Gastrocnemius medialis (tissue), 4 donors: ENCODE measurements at regions of chr11 and their contacts with region 1.

Region 1: GRCh38 chr11:30143098-30143705 is 87.6 kb upstream of the FSHB start:
- DNase-seq: no peak
- ATAC-seq: no peak
- H3K4me3 ChIP-seq: no peak overlapping the region
- H3K27ac ChIP-seq: no peak overlapping the region
- H3K4me1 ChIP-seq: no peaks in the 10 kb centered on the region
- H3K27me3 ChIP-seq: no peaks in the 10 kb centered on the region
- CTCF ChIP-seq: peak in 3 of 5 experiments; percentile 14 to 58 (median 53)
- POLR2A ChIP-seq: no peak

Region 2: DNA sequence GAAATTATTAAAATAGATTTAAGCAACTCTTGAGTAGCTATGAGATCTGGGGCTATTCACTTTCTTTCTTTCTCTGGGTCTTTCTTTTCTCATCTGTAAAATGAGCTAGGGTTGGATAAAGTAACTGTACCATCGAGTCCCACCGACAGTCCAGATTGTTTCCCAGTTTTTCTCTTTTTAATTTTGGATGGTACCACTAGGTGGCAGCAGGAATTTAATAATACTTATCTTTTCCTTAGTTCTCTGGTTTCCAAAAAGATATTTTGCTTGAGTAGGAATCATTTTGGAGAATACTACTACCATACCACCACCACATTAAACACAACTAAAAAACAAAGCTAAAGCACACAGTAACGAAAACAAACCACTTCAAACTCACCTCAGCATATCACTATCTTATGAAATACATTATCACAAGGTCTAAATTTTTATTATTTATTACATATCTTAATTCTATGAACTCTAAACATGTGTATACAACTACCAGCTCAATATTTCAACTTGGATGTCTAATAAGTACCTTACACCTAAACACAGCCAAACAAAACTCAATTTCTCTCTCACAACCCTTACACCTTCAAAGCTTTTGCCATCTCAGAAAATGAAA is 710.4 kb before region 1 on chr11:
- in situ Hi-C with region 1: no loop called
- intact Hi-C with region 1: loop called (anchors 5 kb)
- DNase-seq: no peak
- ATAC-seq: no peak
- H3K4me3 ChIP-seq: no peak overlapping the region
- H3K27ac ChIP-seq: no peak overlapping the region
- H3K4me1 ChIP-seq: no peaks in the 10 kb centered on the region
- H3K27me3 ChIP-seq: no peaks in the 10 kb centered on the region
- CTCF ChIP-seq: peak in 2 of 5 experiments; percentile 11 to 25
- POLR2A ChIP-seq: no peak

Region 3: DNA sequence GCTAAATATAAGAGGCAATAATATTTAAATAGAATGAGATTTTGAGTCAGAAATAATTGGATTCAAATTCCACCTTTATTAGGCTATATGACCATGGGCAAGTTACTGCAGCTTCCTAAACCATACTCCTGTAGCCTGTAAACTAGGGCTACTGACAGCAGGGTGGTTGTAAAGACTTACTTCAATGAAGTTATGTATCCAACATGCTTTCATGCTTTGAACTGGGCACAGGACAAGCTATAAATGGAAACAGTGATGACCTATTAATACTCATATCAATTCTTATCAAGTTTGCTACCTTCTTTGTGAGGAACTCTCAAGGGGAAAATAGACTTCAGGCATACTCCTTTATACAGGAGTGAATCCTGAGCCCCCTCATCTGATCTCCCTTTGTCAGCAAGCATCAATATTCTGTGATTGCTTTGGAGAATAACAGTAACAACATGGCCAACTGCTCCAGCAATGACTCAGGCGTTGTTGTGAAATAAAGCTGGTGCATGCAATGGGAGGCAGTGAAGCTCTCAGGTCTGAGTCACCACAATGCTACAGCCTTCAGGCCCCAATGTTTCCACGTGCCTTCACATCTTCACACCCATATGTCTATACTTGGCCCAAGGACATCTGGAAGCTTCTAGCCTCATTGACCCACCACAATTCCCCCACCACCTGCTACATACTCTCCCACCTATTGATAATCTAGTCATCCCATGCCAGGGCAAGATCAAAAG is 228.8 kb before region 1 on chr11:
- in situ Hi-C with region 1: no loop called
- intact Hi-C with region 1: no loop called
- DNase-seq: no peak
- ATAC-seq: no peak
- H3K4me3 ChIP-seq: no peak overlapping the region
- H3K27ac ChIP-seq: no peak overlapping the region
- H3K4me1 ChIP-seq: no peaks in the 10 kb centered on the region
- H3K27me3 ChIP-seq: no peaks in the 10 kb centered on the region
- CTCF ChIP-seq: no peak
- POLR2A ChIP-seq: no peak

Region 4: DNA sequence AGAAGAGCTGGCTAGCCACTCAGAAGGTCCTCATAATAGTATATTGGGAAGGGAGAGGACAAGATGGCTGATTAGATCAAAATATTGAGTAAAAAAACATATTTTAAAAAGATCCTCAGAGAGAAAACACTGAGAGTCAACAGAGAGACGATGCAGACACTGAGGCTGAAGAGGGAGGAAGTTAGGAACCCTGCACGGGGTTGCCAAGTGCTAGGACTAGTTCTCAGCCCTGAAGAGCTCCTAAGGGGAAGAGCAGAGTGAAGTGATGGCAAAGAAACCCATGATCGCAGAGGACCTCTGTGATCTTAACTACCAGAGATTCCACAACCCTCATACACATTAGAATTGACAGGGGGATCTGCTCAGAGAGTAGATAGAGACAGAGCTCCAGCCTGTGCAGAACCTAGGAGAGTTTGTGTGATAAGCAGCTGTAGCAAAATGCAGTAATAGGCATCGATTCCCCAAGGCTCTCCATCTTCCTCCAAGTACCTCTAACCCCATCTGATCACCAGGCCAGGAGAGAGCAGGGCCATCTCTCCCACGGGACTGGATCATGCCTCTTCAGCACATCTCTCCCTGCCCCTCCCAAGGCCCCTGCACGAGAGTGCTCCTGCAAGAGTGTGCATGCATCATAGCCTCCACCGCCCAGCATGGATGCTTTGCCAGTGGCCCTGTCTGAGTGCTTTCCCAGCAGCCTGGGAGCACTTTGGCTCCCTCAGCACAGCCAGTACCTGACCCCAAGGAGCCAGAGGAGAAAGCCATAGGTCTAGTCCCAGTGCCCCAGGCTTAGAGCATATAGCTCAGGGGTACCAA is 138.5 kb after region 1 on chr11:
- in situ Hi-C with region 1: no loop called
- intact Hi-C with region 1: no loop called
- DNase-seq: no peak
- ATAC-seq: no peak
- H3K4me3 ChIP-seq: no peak overlapping the region
- H3K27ac ChIP-seq: no peak overlapping the region
- H3K4me1 ChIP-seq: no peaks in the 10 kb centered on the region
- H3K27me3 ChIP-seq: no peaks in the 10 kb centered on the region
- CTCF ChIP-seq: no peak
- POLR2A ChIP-seq: no peak